ENCODE measurements at regions of chr3 and their contacts with region 1.

Region 1: DNA sequence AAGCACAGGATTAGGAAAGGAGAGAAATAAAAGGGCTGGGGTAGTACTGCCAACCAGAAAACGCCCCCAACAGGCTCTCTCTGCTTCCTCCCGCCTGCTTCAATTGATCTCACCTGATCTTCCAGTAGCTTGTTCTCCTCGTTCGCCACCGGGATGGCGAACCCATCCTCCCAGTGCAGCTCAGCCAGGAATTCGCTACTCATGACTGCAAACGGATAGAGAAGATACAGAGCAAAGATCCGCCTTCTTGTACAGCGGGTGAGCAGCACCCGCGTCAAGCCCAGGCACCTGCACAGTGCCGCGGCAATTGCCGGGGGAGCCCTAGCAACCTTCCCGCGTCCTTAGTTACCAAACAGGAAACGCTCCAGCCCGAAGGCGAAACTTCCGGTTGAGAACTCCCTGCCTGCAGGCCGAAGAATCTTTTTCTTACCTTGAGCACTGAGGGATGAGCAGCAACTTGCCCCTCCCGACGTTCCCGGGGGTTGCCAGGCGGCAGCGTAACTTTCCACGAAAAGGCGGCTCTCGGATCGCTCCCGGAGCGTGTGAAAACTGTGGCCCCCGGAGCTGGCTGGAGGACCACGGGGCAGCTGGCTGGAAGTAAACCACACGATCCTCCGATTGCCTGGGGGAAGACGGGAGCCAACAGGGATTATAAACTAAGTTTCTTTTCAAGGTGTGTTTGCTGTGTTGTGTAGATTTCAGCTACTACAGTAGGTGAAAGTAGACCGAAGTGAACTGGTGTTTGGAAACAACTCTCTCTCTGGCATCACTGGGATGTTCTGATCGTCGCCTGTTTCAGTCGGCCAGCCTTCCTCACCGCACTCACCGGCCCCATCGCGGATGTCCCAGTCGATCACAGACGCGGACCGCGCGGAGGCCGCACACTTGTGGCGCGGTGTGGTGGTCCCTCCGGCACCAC is at the start of gene CCDC39:
- DNase-seq: peak; percentile 12 to 62 (median 47)
- ATAC-seq: peak; percentile 80
- H3K4me3 ChIP-seq: peak within 1 kb of the TSS; percentile 72
- H3K4me3 Mint-ChIP-seq: peak within 1 kb of the TSS; percentile 84 to 94 (median 89)
- H3K27ac ChIP-seq: peak within 1 kb of the TSS; percentile 49
- H3K27ac Mint-ChIP-seq: peak within 1 kb of the TSS in 8 of 9 donors; percentile 21 to 80 (median 68)
- H3K4me1 ChIP-seq: peaks cover 9 to 12% of the 10 kb centered on the region in 2 donors
- H3K4me1 Mint-ChIP-seq: peaks cover 14 to 25% (median 18%) of the 10 kb centered on the region in 7 donors
- H3K27me3 ChIP-seq: peaks cover 0 to 3% of the 10 kb centered on the region in 2 donors
- H3K27me3 Mint-ChIP-seq: peaks cover 45 to 66% (median 57%) of the 10 kb centered on the region in 5 donors
- total RNA-seq, gene CCDC39: not detected

Region 2: DNA sequence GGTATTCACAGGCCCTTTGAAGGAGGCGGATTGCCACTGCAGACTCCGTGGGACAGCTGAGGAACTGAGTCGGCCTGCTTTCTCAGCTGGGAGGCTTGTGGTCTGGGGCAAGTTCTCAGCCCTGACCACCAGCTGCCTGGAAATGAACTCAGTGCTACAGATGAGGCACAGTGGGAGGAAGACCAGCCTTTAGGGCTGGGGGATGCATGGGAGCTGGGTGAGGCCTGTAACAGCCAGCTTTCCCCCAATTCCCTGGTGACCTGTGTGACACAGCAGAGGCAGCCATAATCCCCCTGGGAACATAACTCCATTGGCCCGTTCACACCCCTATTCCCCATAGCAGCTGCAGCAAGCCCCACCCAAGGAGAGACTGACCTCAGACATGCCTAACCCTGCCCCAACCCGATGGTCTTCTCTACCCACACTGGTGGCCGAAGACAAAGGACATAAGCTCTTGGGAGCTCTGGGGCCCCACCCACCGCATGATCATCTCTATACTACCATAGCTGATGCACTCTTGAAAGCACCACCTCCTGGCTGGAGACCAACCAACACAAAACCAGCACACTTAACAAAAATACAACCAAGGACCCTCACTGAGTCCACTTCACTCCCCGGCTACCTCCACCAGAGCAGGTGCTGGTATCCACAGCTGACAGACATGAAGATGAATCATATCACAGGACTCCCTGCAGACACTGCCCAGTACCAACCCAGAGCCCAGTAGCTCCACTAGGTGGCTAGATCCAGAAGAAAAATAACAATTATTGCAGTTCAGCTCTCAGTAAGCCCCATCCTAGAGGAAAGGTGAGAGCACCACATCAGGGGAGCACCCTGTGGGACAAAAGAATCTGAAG is 1632.7 kb before region 1 on chr3:
- CTCF ChIA-PET with region 1: no interaction called
- POLR2A ChIA-PET with region 1: no interaction called
- intact Hi-C with region 1: no loop called
- DNase-seq: no peak
- ATAC-seq: no peak
- H3K4me3 ChIP-seq: no peak overlapping the region
- H3K4me3 Mint-ChIP-seq: peak overlapping the region in 5 of 10 donors; percentile 5 to 44 (median 14)
- H3K27ac ChIP-seq: no peak overlapping the region
- H3K27ac Mint-ChIP-seq: peak overlapping the region in 7 of 9 donors; percentile 17 to 86 (median 58)
- H3K4me1 ChIP-seq: peaks cover 0 to 11% of the 10 kb centered on the region in 2 donors
- H3K4me1 Mint-ChIP-seq: peaks cover 33 to 80% (median 70%) of the 10 kb centered on the region in 7 donors
- H3K27me3 ChIP-seq: no peaks in the 10 kb centered on the region
- H3K27me3 Mint-ChIP-seq: no peaks in the 10 kb centered on the region

Region 3: DNA sequence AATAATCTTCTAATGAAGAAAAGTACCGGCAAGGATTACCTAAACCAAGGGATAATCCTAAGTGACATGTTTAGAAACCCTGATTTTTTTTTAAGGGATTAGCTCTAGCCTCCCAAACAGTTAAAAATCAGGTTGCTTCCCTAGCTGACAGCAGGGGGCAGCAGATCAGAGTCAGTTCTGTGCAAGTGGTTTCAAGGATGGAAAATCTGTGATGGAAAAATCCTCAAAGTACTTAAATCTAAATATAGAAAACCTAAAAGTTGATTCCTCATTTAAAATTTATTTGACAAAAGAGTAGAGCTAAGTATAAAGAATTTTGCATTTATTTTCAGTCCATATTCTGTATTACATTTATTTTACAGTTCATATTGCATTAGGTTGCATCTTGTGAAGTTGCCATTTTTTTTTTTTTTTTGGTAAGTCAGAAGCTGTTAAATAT is 750.3 kb before region 1 on chr3:
- CTCF ChIA-PET with region 1: no interaction called
- POLR2A ChIA-PET with region 1: no interaction called
- intact Hi-C with region 1: loop called in 1 of 2 experiments (anchors 5 kb)
- DNase-seq: peak in 7 of 9 donors; percentile 5 to 23 (median 12)
- ATAC-seq: no peak
- H3K4me3 ChIP-seq: no peak overlapping the region
- H3K4me3 Mint-ChIP-seq: no peak overlapping the region
- H3K27ac ChIP-seq: no peak overlapping the region
- H3K27ac Mint-ChIP-seq: no peak overlapping the region
- H3K4me1 ChIP-seq: no peaks in the 10 kb centered on the region
- H3K4me1 Mint-ChIP-seq: peaks cover 0 to 7% (median 0%) of the 10 kb centered on the region in 7 donors
- H3K27me3 ChIP-seq: no peaks in the 10 kb centered on the region
- H3K27me3 Mint-ChIP-seq: peaks cover 8 to 27% (median 15%) of the 10 kb centered on the region in 5 donors

Region 4: DNA sequence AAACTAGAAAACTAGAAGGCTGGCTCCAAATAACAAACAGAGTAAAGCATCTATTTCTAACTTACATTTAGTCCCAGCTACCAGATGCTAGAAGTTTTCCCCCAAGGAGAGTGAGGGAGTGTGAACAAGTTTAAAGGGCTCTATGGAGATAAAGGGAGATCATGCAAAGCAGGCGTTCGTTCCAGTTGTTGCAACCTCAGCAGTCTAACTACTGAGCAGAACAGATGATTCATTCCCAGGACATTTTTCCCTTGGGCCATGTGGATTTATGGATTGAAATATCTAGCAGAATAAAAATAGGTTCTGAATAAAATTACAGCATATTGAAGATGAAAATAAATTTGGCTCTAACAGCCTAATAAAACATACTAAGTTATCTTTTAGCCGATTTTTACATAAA is 232.3 kb before region 1 on chr3:
- CTCF ChIA-PET with region 1: no interaction called
- POLR2A ChIA-PET with region 1: no interaction called
- intact Hi-C with region 1: no loop called
- DNase-seq: no peak
- ATAC-seq: no peak
- H3K4me3 ChIP-seq: no peak overlapping the region
- H3K4me3 Mint-ChIP-seq: no peak overlapping the region
- H3K27ac ChIP-seq: no peak overlapping the region
- H3K27ac Mint-ChIP-seq: no peak overlapping the region
- H3K4me1 ChIP-seq: no peaks in the 10 kb centered on the region
- H3K4me1 Mint-ChIP-seq: no peaks in the 10 kb centered on the region
- H3K27me3 ChIP-seq: no peaks in the 10 kb centered on the region
- H3K27me3 Mint-ChIP-seq: no peaks in the 10 kb centered on the region

Region 5: GRCh38 chr3:180626844-180627243 is 52.6 kb before region 1 on chr3:
- CTCF ChIA-PET with region 1: no interaction called
- POLR2A ChIA-PET with region 1: no interaction called
- intact Hi-C with region 1: loop called in 1 of 2 experiments (anchors 5 kb)
- DNase-seq: no peak
- ATAC-seq: no peak
- H3K4me3 ChIP-seq: no peak overlapping the region
- H3K4me3 Mint-ChIP-seq: no peak overlapping the region
- H3K27ac ChIP-seq: no peak overlapping the region
- H3K27ac Mint-ChIP-seq: no peak overlapping the region
- H3K4me1 ChIP-seq: no peaks in the 10 kb centered on the region
- H3K4me1 Mint-ChIP-seq: peaks cover 8 to 34% (median 20%) of the 10 kb centered on the region in 7 donors
- H3K27me3 ChIP-seq: no peaks in the 10 kb centered on the region
- H3K27me3 Mint-ChIP-seq: no peaks in the 10 kb centered on the region

Region 6: GRCh38 chr3:180798197-180798596 is 118.8 kb after region 1 on chr3:
- CTCF ChIA-PET with region 1: no interaction called
- POLR2A ChIA-PET with region 1: no interaction called
- intact Hi-C with region 1: no loop called
- DNase-seq: no peak
- ATAC-seq: no peak
- H3K4me3 ChIP-seq: no peak overlapping the region
- H3K4me3 Mint-ChIP-seq: no peak overlapping the region
- H3K27ac ChIP-seq: no peak overlapping the region
- H3K27ac Mint-ChIP-seq: no peak overlapping the region
- H3K4me1 ChIP-seq: no peaks in the 10 kb centered on the region
- H3K4me1 Mint-ChIP-seq: no peaks in the 10 kb centered on the region
- H3K27me3 ChIP-seq: no peaks in the 10 kb centered on the region
- H3K27me3 Mint-ChIP-seq: peaks cover 0 to 29% (median 24%) of the 10 kb centered on the region in 5 donors

Region 7: GRCh38 chr3:180989291-180990163 is 310.1 kb after region 1 on chr3 and contains the start of gene DNAJC19:
- CTCF ChIA-PET with region 1: no interaction called
- POLR2A ChIA-PET with region 1: no interaction called
- intact Hi-C with region 1: loop called in 1 of 2 experiments (anchors 5 kb)
- DNase-seq: peak; percentile 69 to 94 (median 93)
- ATAC-seq: peak; percentile 99
- H3K4me3 ChIP-seq: peak within 1 kb of the TSS; percentile 78
- H3K4me3 Mint-ChIP-seq: peak within 1 kb of the TSS; percentile 91 to 99 (median 97)
- H3K27ac ChIP-seq: peak within 1 kb of the TSS; percentile 80
- H3K27ac Mint-ChIP-seq: peak within 1 kb of the TSS; percentile 90 to 99 (median 96)
- H3K4me1 ChIP-seq: peaks cover 15 to 23% of the 10 kb centered on the region in 2 donors
- H3K4me1 Mint-ChIP-seq: peaks cover 15 to 58% (median 44%) of the 10 kb centered on the region in 7 donors
- H3K27me3 ChIP-seq: no peaks in the 10 kb centered on the region
- H3K27me3 Mint-ChIP-seq: peaks cover 0 to 7% (median 0%) of the 10 kb centered on the region in 5 donors
- total RNA-seq, gene DNAJC19: 20.7 to 74.1 (median 40.2) TPM

Measured in naive thymus-derived CD4-positive, alpha-beta T cell (primary cell).